Right cardiac atrium (tissue), 5 donors: ENCODE measurements at regions of chr11 and their contacts with region 1.

Region 1: DNA sequence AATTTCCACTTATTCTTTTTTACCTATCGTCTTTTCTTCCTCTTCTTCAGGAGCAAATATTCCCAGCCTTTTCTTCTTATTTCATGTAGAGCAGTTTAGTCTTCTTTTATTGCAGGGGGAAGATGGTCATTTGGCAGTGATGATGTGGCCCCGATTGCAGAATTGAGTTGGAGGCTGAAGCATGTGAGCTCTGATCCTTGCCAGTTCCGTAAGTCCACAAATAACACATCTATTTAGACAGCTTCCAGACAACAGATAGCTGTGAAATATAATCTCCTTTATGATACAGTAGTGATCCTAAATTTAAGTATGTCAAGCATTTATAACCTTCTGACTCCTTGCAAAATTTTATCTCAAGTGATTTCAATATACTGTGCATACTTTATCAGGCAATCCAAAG is 27.5 kb downstream of the REXO2 start:
- DNase-seq: no peak
- ATAC-seq: no peak
- H3K4me3 ChIP-seq: no peak overlapping the region
- H3K27ac ChIP-seq: no peak overlapping the region
- H3K4me1 ChIP-seq: no peaks in the 10 kb centered on the region
- H3K27me3 ChIP-seq: no peaks in the 10 kb centered on the region

Region 2: GRCh38 chr11:114358716-114359115 is 108.0 kb before region 1 on chr11:
- intact Hi-C with region 1: loop called in 1 of 4 experiments (anchors 5 kb)
- DNase-seq: no peak
- ATAC-seq: peak in 1 of 2 donors; percentile 55
- H3K4me3 ChIP-seq: no peak overlapping the region
- H3K27ac ChIP-seq: no peak overlapping the region
- H3K4me1 ChIP-seq: no peaks in the 10 kb centered on the region
- H3K27me3 ChIP-seq: no peaks in the 10 kb centered on the region